Posterior vena cava (tissue), 2 donors: ENCODE measurements at regions of chr19 and their contacts with region 1.

Region 1: DNA sequence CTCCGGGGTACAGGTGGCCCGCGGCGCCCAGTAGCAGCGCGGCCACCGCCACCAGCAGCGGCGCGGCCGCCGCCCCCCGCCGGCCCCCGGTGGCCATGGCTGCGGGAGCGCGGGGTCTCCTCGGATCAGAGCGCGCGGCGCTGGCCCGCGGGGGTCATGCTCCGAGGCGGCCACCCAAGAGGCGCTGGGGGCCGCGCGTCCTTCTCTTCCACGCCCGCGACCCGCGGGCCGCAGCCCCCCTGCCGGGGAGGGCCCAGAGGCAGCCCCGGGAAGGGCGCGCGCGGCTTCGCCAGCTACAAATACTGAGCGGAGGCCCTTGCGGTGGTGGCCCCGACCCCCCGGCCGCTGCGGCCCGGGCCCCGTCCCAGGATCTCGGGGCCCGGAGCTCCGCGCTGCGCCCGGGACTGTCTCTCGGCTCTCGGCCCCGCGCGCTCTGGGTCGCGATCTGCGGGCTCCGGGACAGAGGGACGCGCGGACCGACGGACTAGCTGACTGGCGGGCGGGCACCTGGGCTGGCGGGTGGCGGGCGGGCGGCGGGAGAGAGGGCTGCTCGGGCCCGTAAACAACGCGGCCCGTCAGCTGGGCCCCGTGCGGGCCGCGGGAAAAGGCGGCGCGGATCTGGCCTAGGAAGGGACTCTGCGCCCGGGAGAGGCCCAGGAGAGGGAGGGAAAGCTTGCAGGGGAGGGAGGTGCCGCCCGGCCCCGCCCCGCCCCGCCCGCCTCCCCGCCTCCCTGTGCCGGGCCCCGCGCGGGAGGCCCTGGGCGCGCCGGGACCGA is at the start of gene INSR:
- DNase-seq: peak; percentile 96
- total RNA-seq, gene INSR: 47.5 to 63.0 TPM

Region 2: GRCh38 chr19:7159105-7159933 is 134.7 kb before region 1 on chr19:
- intact Hi-C with region 1: loop called in 1 of 2 experiments (anchors 10 kb)
- DNase-seq: peak; percentile 87

Region 3: DNA sequence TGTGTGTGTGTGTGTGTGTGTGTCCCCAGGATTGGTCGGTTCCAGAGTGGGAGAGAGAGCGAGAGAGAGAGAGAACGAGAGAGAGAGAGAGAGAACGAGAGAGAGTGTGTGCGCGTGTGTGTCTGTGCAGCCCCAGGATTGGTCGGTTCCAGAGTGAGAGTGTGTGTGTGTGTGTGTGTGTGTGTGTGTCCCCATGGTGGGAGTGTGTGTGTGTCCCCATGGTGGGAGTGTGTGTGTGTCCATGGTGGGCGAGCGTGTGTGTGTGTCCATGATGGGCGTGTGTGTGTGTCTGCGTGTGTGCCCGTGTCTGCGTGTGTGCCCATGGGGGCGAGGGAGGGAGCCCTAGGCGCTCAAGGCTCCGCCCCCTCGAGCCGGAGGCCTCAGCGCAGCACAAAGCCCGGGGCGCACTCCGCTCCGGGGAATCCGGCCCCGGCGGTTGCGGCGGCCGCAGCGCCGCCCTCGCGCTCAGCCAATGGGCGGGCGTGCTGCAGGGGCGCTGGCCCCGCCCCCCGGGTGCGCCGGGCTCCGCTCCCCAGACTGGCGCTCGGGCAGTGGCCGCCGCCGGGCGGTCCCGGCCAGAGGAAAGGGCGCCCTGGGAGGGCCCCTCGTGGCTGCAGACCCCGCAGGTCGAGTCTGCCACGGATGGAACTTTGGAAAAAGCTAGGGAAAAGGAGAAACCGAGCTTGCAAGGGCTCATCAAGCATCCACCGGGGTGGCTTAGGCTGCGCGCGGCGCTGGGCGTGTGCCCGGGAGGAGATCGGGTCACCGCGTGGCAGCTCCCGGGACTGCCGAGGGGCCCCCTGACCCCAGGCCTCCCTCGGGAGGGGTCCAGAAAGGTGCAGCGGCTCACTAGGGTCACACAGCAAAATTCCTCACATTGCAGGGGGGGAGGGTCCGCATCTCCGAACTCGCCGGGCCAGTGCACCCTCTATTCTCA is 96.0 kb before region 1 on chr19:
- intact Hi-C with region 1: loop called (anchors 2 kb)
- DNase-seq: peak; percentile 98

Region 4: GRCh38 chr19:7242601-7243258 is 51.3 kb before region 1 on chr19:
- intact Hi-C with region 1: loop called in 1 of 2 experiments (anchors 2 kb)
- DNase-seq: no peak